ENCODE measurements at regions of chr18 and their contacts with region 1.

Region 1: DNA sequence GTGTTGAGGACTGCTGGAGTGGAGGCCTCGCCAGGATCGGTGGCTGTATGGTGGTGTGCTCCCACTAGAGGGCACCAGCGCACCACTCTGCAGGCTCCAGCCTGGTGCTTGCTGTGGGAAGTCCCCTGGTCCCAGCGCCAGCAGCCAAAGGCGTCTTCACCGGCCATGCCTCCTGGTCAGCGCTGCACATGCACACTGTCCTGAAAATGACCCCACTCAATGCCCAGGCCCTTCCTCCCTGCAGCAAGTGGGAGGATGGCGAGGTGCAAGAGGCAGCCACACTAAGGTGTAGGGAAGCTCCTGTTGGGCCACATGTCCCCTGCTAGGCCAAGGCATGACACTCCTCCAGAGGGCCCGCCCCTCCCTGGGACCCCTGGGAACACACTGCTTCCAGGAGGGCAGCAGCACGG is 136.5 kb downstream of the CTIF start:
- DNase-seq: peak; percentile 68 to 89 (median 80)
- ATAC-seq: peak; percentile 96
- H3K4me3 ChIP-seq: no peak overlapping the region
- H3K4me3 Mint-ChIP-seq: no peak overlapping the region
- H3K27ac ChIP-seq: no peak overlapping the region
- H3K27ac Mint-ChIP-seq: no peak overlapping the region
- H3K4me1 ChIP-seq: peaks cover 4% of the 10 kb centered on the region
- H3K4me1 Mint-ChIP-seq: no peaks in the 10 kb centered on the region
- H3K27me3 ChIP-seq: no peaks in the 10 kb centered on the region
- H3K27me3 Mint-ChIP-seq: no peaks in the 10 kb centered on the region
- CTCF ChIP-seq: peak; percentile 91

Region 2: GRCh38 chr18:48600456-48601090 is 74.8 kb before region 1 on chr18:
- CTCF ChIA-PET with region 1: no interaction called
- POLR2A ChIA-PET with region 1: no interaction called
- intact Hi-C with region 1: no loop called
- DNase-seq: no peak
- ATAC-seq: no peak
- H3K4me3 ChIP-seq: no peak overlapping the region
- H3K4me3 Mint-ChIP-seq: no peak overlapping the region
- H3K27ac ChIP-seq: no peak overlapping the region
- H3K27ac Mint-ChIP-seq: no peak overlapping the region
- H3K4me1 ChIP-seq: no peaks in the 10 kb centered on the region
- H3K4me1 Mint-ChIP-seq: no peaks in the 10 kb centered on the region
- H3K27me3 ChIP-seq: no peaks in the 10 kb centered on the region
- H3K27me3 Mint-ChIP-seq: no peaks in the 10 kb centered on the region
- CTCF ChIP-seq: no peak

Region 3: DNA sequence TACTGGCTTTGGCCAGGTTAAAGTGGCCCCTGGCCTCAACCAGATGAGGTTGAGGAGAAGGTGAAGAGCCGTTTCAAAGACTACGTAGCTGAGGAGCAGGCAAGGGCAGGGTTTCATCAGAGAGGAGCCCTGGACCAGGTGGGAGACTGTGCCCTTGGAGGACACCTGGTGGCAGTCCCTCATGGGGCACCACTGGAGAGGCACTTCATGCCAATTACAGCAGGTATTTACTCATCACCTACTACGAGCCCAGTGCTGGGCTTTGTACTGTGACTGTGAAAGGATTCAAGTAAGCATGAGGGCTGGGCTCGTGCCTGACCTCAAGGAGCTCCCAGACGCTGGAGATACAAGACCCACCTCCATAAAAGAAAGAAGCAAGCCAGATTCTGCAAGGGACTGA is 237.8 kb after region 1 on chr18:
- CTCF ChIA-PET with region 1: no interaction called
- POLR2A ChIA-PET with region 1: no interaction called
- intact Hi-C with region 1: loop called in 1 of 2 experiments (anchors 5 kb)
- DNase-seq: peak in 7 of 9 experiments; percentile 33 to 76 (median 54)
- ATAC-seq: peak; percentile 67
- H3K4me3 ChIP-seq: no peak overlapping the region
- H3K4me3 Mint-ChIP-seq: no peak overlapping the region
- H3K27ac ChIP-seq: no peak overlapping the region
- H3K27ac Mint-ChIP-seq: no peak overlapping the region
- H3K4me1 ChIP-seq: peaks cover 18% of the 10 kb centered on the region
- H3K4me1 Mint-ChIP-seq: peaks cover 31% of the 10 kb centered on the region
- H3K27me3 ChIP-seq: no peaks in the 10 kb centered on the region
- H3K27me3 Mint-ChIP-seq: no peaks in the 10 kb centered on the region
- CTCF ChIP-seq: peak; percentile 41

Region 4: DNA sequence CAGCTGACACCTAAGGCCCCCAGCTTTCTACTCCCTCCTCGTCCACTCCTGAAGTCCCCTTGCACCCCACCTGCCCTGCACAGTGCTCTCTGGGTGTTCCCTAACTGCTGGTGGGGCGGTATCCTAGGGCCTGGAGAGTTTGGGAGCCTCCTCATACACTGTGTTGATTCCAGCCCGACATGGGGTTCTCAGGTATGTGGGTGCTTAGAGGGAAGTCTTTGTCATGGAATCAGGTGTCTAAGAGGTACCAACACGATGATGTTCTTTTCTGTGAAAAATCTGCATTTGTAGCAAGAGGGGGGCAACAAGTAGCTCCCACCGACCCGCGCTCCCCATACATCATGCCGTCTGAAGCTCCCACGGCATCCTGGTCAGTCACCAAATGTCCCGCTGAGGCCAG is 372.2 kb after region 1 on chr18:
- CTCF ChIA-PET with region 1: no interaction called
- POLR2A ChIA-PET with region 1: no interaction called
- intact Hi-C with region 1: loop called in 1 of 2 experiments (anchors 2 kb)
- DNase-seq: no peak
- ATAC-seq: no peak
- H3K4me3 ChIP-seq: no peak overlapping the region
- H3K4me3 Mint-ChIP-seq: no peak overlapping the region
- H3K27ac ChIP-seq: no peak overlapping the region
- H3K27ac Mint-ChIP-seq: no peak overlapping the region
- H3K4me1 ChIP-seq: peaks cover under 1% of the 10 kb centered on the region
- H3K4me1 Mint-ChIP-seq: peaks cover 9% of the 10 kb centered on the region
- H3K27me3 ChIP-seq: no peaks in the 10 kb centered on the region
- H3K27me3 Mint-ChIP-seq: no peaks in the 10 kb centered on the region
- CTCF ChIP-seq: no peak

Region 5: GRCh38 chr18:49335677-49336076 is 660.3 kb after region 1 on chr18:
- CTCF ChIA-PET with region 1: interaction called, 4 read pairs
- POLR2A ChIA-PET with region 1: no interaction called
- intact Hi-C with region 1: loop called (anchors 1 to 10 kb)
- DNase-seq: peak in 2 of 9 experiments; percentile 15 to 29
- ATAC-seq: no peak
- H3K4me3 ChIP-seq: no peak overlapping the region
- H3K4me3 Mint-ChIP-seq: no peak overlapping the region
- H3K27ac ChIP-seq: no peak overlapping the region
- H3K27ac Mint-ChIP-seq: no peak overlapping the region
- H3K4me1 ChIP-seq: no peaks in the 10 kb centered on the region
- H3K4me1 Mint-ChIP-seq: peaks cover 4% of the 10 kb centered on the region
- H3K27me3 ChIP-seq: no peaks in the 10 kb centered on the region
- H3K27me3 Mint-ChIP-seq: no peaks in the 10 kb centered on the region
- CTCF ChIP-seq: no peak

Region 6: GRCh38 chr18:49500201-49500921 is 825.0 kb after region 1 on chr18:
- CTCF ChIA-PET with region 1: no interaction called
- POLR2A ChIA-PET with region 1: no interaction called
- intact Hi-C with region 1: loop called in 1 of 2 experiments (anchors 10 kb)
- DNase-seq: no peak
- ATAC-seq: no peak
- H3K4me3 ChIP-seq: no peak overlapping the region
- H3K4me3 Mint-ChIP-seq: no peak overlapping the region
- H3K27ac ChIP-seq: no peak overlapping the region
- H3K27ac Mint-ChIP-seq: no peak overlapping the region
- H3K4me1 ChIP-seq: no peaks in the 10 kb centered on the region
- H3K4me1 Mint-ChIP-seq: no peaks in the 10 kb centered on the region
- H3K27me3 ChIP-seq: peaks cover 0 to 2% of the 10 kb centered on the region in 2 experiments
- H3K27me3 Mint-ChIP-seq: peaks cover 18% of the 10 kb centered on the region
- CTCF ChIP-seq: no peak

Region 7: GRCh38 chr18:50266248-50266704 is 1590.9 kb after region 1 on chr18 and contains the start of gene CFAP53:
- CTCF ChIA-PET with region 1: no interaction called
- POLR2A ChIA-PET with region 1: no interaction called
- intact Hi-C with region 1: loop called in 1 of 2 experiments (anchors 5 kb)
- DNase-seq: peak; percentile 58 to 93 (median 86)
- ATAC-seq: peak; percentile 83
- H3K4me3 ChIP-seq: peak within 1 kb of the TSS; percentile 38 to 67
- H3K4me3 Mint-ChIP-seq: peak within 1 kb of the TSS; percentile 88
- H3K27ac ChIP-seq: peak within 1 kb of the TSS; percentile 43 to 85
- H3K27ac Mint-ChIP-seq: peak within 1 kb of the TSS; percentile 85
- H3K4me1 ChIP-seq: peaks cover 18% of the 10 kb centered on the region
- H3K4me1 Mint-ChIP-seq: peaks cover 24% of the 10 kb centered on the region
- H3K27me3 ChIP-seq: no peaks in the 10 kb centered on the region
- H3K27me3 Mint-ChIP-seq: no peaks in the 10 kb centered on the region
- CTCF ChIP-seq: no peak
- total RNA-seq, gene CFAP53: 0.22 to 0.36 TPM

Measured in CD8-positive, alpha-beta T cell (primary cell).